OCI-LY7 (cell line): ENCODE measurements at regions of chr15 and their contacts with region 1.

Region 1: GRCh38 chr15:89888214-89888804 is 5.5 kb downstream of the AP3S2 start:
- DNase-seq: peak; percentile 22
- H3K4me3 ChIP-seq: no peak overlapping the region
- H3K27ac ChIP-seq: no peak overlapping the region
- H3K4me1 ChIP-seq: peaks cover 28% of the 10 kb centered on the region
- CTCF ChIP-seq: peak; percentile 67

Region 2: DNA sequence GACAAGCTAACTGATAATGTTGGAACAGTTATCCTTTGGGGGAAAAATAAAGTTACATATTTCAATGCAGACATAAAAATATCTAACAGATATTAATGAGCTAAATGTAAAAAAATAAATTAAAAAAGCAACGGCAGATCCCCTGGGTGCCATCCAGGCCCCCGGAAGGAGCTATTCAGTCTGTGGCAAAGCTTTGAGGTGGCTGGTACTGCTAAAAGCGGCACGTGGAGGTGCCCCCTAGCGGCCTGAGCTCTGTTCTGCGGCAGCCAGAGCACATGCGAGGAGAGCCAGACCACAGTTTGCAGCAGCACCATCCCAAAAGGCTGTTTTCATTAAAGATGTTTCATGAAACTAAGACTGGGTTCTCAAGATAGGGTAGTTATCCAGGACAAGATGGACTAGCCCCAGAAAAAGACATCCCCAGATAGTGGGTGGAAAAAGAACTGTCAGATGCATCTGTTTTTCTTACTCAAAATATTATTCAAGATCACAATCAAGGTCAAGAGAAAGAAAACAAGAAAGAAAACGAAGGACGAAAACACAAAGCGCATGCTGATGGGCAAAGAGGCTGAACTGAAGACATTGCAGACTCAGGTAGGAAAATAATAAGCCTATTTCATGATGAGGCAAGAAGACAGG is 13.3 kb before region 1 on chr15:
- CTCF ChIA-PET with region 1: interaction called, 3 read pairs
- POLR2A ChIA-PET with region 1: interaction called, 12 read pairs
- intact Hi-C with region 1: no loop called
- DNase-seq: peak; percentile 87
- H3K4me3 ChIP-seq: no peak overlapping the region
- H3K27ac ChIP-seq: no peak overlapping the region
- H3K4me1 ChIP-seq: peaks cover 5% of the 10 kb centered on the region
- CTCF ChIP-seq: peak; percentile 99

Region 3: DNA sequence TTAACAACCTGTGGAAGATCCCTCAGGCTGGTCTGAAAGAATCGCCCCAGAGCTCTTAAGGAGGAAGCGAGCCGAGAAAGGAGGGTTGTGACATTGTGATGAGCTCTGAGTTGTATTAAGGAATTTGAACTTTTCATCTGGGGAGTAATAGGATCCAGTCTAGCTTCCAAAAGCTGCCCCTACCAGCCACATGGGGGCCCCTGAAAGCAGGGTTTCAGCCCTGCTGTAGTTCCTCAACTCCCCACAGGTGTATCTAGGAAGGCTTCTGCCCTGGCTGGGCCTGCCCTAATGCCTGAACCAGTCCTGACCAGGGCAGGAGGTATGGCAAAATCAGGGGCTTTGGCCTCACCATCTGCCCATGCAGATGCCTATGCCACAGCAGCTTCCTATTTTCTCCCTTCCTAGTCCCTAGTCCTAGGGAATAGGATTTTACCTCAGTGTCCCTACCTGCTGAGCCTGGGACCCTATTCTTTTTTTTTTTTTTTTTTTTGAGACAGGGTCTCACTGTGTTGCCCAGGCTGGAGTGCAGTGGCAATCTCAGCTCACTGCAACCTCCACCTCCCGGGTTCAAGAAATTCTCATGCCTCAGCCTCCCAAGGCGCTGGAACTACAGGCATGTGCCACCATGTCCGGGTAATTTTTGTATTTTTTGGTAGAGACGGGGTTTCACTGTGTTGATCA is 10.4 kb after region 1 on chr15:
- CTCF ChIA-PET with region 1: no interaction called
- POLR2A ChIA-PET with region 1: no interaction called
- intact Hi-C with region 1: no loop called
- DNase-seq: peak; percentile 82
- H3K4me3 ChIP-seq: no peak overlapping the region
- H3K27ac ChIP-seq: no peak overlapping the region
- H3K4me1 ChIP-seq: peaks cover 6% of the 10 kb centered on the region
- CTCF ChIP-seq: peak; percentile 86

Region 4: DNA sequence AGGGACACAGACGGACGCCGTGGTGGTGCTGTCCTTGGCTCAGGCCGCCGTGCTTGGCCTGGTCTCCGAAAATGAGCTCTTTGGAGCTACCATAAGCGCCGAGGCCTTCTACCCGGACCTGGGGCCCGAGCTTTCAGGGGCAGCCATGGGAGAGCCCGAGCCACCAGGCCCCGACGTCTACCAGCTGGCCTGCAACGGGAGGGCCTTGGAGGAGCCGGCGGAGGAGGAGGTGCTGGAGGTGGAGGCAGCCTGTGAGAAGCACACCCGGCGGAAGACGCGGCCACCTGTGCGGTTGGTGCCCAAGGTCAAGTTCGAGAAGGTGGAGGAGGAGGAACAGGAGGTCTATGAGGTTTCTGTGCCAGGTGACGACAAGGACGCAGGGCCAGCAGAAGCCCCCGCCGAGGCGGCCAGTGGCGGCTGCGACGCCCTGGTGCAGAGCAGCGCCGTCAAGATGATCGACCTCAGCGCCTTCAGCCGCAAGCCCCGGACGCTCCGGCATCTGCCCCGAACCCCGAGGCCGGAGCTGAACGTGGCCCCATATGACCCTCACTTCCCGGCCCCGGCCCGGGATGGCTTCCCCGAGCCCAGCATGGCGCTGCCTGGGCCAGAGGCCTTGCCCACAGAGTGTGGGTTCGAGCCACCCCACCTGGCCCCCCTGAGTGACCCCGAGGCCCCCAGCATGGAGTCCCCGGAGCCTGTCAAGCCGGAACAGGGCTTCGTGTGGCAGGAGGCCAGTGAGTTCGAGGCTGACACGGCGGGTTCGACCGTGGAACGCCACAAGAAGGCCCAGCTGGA is 179.0 kb after region 1 on chr15:
- CTCF ChIA-PET with region 1: no interaction called
- POLR2A ChIA-PET with region 1: no interaction called
- intact Hi-C with region 1: no loop called
- DNase-seq: no peak
- H3K4me3 ChIP-seq: no peak overlapping the region
- H3K27ac ChIP-seq: no peak overlapping the region
- H3K4me1 ChIP-seq: peaks cover 39% of the 10 kb centered on the region
- CTCF ChIP-seq: no peak